ENCODE measurements at regions of chr3 and their contacts with region 1.

Region 1: DNA sequence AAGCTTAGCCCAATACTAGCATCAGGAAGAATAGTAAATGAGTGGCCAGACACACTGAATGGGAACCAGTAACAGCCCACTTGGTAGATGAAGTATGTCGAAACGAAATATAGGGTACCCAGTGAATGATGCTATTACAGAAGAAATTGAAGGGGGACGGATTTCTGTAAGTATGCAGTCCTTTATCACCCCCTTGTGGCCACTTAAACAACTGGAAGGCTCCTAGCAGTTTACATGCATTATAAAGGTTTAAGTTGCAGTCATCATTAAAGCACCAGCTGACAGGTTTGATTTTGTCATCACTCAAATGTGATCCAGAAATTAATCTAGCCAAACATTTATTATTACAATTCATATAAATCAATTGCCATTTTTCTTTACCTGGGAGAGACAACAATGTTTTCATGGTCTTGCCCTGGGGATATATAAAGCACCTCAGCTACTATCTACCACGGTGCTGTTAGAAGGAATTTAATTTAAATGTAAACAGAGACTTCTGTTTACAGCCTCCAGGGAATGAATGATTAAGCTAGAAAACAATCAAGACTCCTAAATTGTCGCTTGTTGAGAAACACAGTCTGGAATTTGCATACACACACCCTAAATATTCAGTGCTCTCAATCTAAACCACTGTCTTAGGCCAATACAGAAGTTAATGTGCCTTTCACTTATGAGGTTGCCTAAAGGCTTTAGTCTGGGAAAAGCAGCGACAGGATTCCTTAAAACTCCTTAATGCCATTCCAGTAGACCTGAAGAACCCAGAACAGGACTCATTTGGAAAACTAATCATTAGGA is 7.8 kb downstream of the EIF1B start:
- DNase-seq: no peak
- ATAC-seq: peak in 1 of 2 donors; percentile 22
- H3K4me3 ChIP-seq: no peak overlapping the region
- H3K27ac ChIP-seq: no peak overlapping the region
- H3K4me1 ChIP-seq: peaks cover 4% of the 10 kb centered on the region
- H3K27me3 ChIP-seq: no peaks in the 10 kb centered on the region

Region 2: DNA sequence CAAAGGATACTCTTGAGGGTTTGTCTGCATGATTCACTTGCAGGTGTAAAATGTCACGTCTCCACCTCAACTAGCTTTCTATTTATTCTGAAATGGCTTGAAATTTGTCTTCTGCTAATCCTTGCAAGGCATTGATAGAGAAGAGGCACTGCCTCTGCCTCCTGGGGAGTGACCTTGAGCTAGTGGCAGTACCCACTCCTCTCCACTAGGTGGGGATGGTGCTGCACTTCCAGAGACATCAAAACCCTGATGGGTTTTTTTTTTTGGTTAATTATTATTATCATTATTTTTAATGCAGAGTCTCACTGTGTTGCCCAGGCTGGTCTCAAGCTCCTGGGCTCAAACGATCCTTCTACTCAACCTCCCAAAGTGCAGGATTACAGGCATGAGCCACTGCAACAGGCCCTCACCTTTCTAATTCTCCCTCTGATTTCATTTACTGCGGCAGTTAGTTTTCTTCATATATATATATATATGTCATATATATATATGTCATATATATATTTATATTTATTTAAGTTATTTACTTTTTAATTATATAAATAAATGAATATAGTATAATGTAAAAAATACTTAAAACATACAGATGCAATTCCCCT is 125.3 kb before region 1 on chr3:
- intact Hi-C with region 1: loop called (anchors 2 to 5 kb)
- DNase-seq: peak; percentile 51 to 80 (median 61)
- ATAC-seq: peak; percentile 46 to 57
- H3K4me3 ChIP-seq: no peak overlapping the region
- H3K27ac ChIP-seq: no peak overlapping the region
- H3K4me1 ChIP-seq: peaks cover 3% of the 10 kb centered on the region
- H3K27me3 ChIP-seq: no peaks in the 10 kb centered on the region

Region 3: DNA sequence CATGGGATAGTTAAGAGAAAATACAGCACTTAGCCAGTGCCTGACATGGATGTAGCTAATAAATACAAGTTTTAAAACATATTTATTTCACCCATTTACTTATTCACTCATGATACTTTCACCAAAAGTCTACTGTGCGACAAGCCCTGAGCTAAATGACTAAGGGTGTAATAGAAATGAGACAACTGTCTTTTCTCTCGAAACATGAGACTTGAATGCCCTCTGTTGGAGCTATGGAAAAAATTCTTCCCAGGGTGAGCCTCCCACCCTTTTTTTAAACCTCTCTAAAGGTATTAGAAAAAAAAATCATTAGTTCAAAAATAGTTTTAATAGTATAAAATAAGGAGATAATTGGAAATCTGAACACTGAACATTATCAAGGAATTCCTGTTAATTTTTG is 115.5 kb after region 1 on chr3:
- intact Hi-C with region 1: no loop called
- DNase-seq: no peak
- ATAC-seq: no peak
- H3K4me3 ChIP-seq: no peak overlapping the region
- H3K27ac ChIP-seq: no peak overlapping the region
- H3K4me1 ChIP-seq: no peaks in the 10 kb centered on the region
- H3K27me3 ChIP-seq: no peaks in the 10 kb centered on the region

Region 4: DNA sequence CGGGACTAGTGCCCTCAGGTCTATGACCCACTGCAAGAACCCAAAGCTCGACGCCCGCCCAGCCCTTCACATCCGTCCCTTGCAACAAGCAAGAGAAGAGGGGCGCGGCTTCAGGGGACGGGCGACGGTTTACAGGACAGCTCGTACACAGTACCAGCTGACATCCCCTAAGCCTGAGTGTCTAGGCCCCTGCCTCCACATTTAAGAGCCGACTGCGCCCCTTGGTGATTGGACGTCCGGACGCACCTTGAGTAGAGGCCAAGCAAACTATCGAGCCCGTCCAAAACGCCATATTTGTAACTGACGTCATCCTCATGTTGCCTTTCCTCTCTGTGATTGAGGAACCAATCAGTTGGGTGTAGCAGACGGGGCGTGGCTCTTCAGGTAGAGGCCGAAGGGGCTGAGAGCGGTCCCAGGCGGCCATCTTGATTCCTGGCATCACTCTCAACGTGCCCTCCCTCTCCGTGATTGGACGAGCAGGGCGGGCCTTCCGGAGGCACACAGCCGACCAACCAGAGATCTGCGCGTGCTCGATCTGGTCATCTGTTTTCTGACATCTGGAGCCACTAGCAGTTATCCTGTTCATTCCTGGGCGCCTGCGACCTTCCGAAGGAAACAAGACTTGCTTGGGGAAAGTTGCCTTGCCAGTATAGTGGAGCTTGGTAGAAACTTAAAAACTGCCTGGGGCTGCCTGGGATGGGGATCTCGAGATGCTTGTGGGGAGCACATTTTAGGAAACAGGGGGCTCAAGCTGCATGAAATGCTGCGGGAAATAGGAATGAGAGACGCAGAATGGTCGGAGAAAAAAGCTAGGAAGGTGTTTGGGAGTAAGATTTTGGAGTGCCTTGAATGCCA is 135.8 kb after region 1 on chr3:
- intact Hi-C with region 1: loop called in 1 of 4 experiments (anchors 10 kb)
- DNase-seq: peak; percentile 99
- ATAC-seq: peak; percentile 98
- H3K4me3 ChIP-seq: peak overlapping the region; percentile 70
- H3K27ac ChIP-seq: peak overlapping the region; percentile 99
- H3K4me1 ChIP-seq: peaks cover 3% of the 10 kb centered on the region
- H3K27me3 ChIP-seq: no peaks in the 10 kb centered on the region

Region 5: DNA sequence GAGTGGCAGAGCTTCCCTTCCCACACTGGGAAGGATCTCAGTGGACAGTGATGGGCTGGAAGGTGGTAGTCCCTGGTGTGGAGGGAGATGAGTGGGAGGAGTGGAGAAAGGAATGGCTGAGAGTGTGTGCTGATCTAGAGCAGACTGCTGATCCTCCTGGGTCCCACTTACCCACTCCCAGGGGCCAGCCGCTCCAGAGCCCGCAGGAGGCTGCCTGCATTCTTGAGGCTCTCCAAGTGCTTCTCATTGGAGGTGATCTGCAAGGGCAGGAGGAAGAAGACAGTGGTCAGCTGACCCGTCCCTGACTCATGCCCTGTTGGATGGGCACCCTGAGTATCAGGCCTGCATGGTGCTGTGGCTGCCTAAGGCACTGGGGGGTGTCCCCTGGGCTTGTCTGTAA is 932.1 kb after region 1 on chr3:
- intact Hi-C with region 1: no loop called
- DNase-seq: no peak
- ATAC-seq: no peak
- H3K4me3 ChIP-seq: no peak overlapping the region
- H3K27ac ChIP-seq: no peak overlapping the region
- H3K4me1 ChIP-seq: peaks cover 15% of the 10 kb centered on the region
- H3K27me3 ChIP-seq: no peaks in the 10 kb centered on the region

Region 6: GRCh38 chr3:41881233-41881821 is 1564.1 kb after region 1 on chr3:
- intact Hi-C with region 1: loop called in 3 of 4 experiments (anchors 10 kb)
- DNase-seq: no peak
- ATAC-seq: no peak
- H3K4me3 ChIP-seq: no peak overlapping the region
- H3K27ac ChIP-seq: no peak overlapping the region
- H3K4me1 ChIP-seq: no peaks in the 10 kb centered on the region
- H3K27me3 ChIP-seq: no peaks in the 10 kb centered on the region